CD4-positive, alpha-beta T cell (primary cell): ENCODE measurements at regions of chr7 and their contacts with region 1.

Region 1: GRCh38 chr7:135281363-135281949 is 47.8 kb downstream of the STRA8 start:
- DNase-seq: peak; percentile 53 to 90 (median 68)
- ATAC-seq: peak; percentile 98
- H3K4me3 ChIP-seq: no peak overlapping the region
- H3K4me3 Mint-ChIP-seq: no peak overlapping the region
- H3K27ac ChIP-seq: no peak overlapping the region
- H3K27ac Mint-ChIP-seq: no peak overlapping the region
- H3K4me1 ChIP-seq: peaks cover 16% of the 10 kb centered on the region
- H3K4me1 Mint-ChIP-seq: peaks cover 15% of the 10 kb centered on the region
- H3K27me3 ChIP-seq: peaks cover 0 to 3% of the 10 kb centered on the region in 2 experiments
- H3K27me3 Mint-ChIP-seq: peaks cover 11% of the 10 kb centered on the region
- CTCF ChIP-seq: peak; percentile 95

Region 2: GRCh38 chr7:135335628-135336139 is 54.2 kb after region 1 on chr7:
- CTCF ChIA-PET with region 1: interaction called, 7 read pairs
- POLR2A ChIA-PET with region 1: no interaction called
- intact Hi-C with region 1: loop called (anchors 2 to 5 kb)
- DNase-seq: peak in 7 of 14 experiments; percentile 2 to 52 (median 29)
- ATAC-seq: no peak
- H3K4me3 ChIP-seq: no peak overlapping the region
- H3K4me3 Mint-ChIP-seq: no peak overlapping the region
- H3K27ac ChIP-seq: no peak overlapping the region
- H3K27ac Mint-ChIP-seq: no peak overlapping the region
- H3K4me1 ChIP-seq: no peaks in the 10 kb centered on the region
- H3K4me1 Mint-ChIP-seq: no peaks in the 10 kb centered on the region
- H3K27me3 ChIP-seq: peaks cover 0 to 2% of the 10 kb centered on the region in 2 experiments
- H3K27me3 Mint-ChIP-seq: peaks cover 5% of the 10 kb centered on the region
- CTCF ChIP-seq: no peak

Region 3: GRCh38 chr7:135558337-135558767 is 276.9 kb after region 1 on chr7:
- CTCF ChIA-PET with region 1: interaction called, 3 read pairs
- POLR2A ChIA-PET with region 1: no interaction called
- intact Hi-C with region 1: loop called (anchors 1 to 2 kb)
- DNase-seq: peak; percentile 29 to 85 (median 52)
- ATAC-seq: peak; percentile 57
- H3K4me3 ChIP-seq: peak overlapping the region; percentile 99
- H3K4me3 Mint-ChIP-seq: no peak overlapping the region
- H3K27ac ChIP-seq: peak overlapping the region; percentile 93 to 99
- H3K27ac Mint-ChIP-seq: no peak overlapping the region
- H3K4me1 ChIP-seq: peaks cover 13% of the 10 kb centered on the region
- H3K4me1 Mint-ChIP-seq: peaks cover 20% of the 10 kb centered on the region
- H3K27me3 ChIP-seq: no peaks in the 10 kb centered on the region
- H3K27me3 Mint-ChIP-seq: no peaks in the 10 kb centered on the region
- CTCF ChIP-seq: peak; percentile 57

Region 4: GRCh38 chr7:135645296-135645904 is 363.9 kb after region 1 on chr7:
- CTCF ChIA-PET with region 1: interaction called, 20 read pairs
- POLR2A ChIA-PET with region 1: interaction called, 3 read pairs
- intact Hi-C with region 1: loop called (anchors 1 kb)
- DNase-seq: peak in 4 of 14 experiments; percentile 20 to 64 (median 56)
- ATAC-seq: peak; percentile 92
- H3K4me3 ChIP-seq: no peak overlapping the region
- H3K4me3 Mint-ChIP-seq: no peak overlapping the region
- H3K27ac ChIP-seq: no peak overlapping the region
- H3K27ac Mint-ChIP-seq: no peak overlapping the region
- H3K4me1 ChIP-seq: no peaks in the 10 kb centered on the region
- H3K4me1 Mint-ChIP-seq: no peaks in the 10 kb centered on the region
- H3K27me3 ChIP-seq: no peaks in the 10 kb centered on the region
- H3K27me3 Mint-ChIP-seq: no peaks in the 10 kb centered on the region
- CTCF ChIP-seq: peak; percentile 77